ENCODE measurements at regions of chr10 and their contacts with region 1.

Region 1: DNA sequence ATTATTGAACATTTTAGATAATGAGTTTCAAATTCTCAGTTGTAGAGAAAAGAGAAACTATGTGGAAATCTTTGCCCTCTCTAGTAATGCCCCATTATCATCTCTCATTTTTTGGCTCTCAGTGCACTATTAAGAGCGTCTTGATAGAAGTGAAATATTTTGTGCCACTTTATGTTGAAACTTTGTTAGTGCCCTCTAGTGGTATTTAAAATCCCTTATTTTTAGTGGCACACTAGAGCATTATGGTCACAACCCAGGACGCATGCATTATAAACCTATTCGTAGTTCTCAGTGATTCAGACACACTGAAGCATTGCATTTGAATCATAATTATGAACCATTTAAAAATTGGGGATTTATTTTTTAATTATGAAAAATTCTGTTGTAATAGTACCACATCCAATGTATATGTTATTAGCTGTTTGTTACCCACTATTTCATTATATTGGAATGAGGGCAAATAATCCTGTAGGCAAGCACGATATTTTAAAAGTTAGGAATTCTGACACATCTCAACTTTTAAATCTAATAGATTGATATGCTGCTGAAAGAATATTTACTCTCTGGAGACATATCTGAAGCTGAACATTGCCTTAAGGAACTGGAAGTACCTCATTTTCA is 21.9 kb downstream of the PDCD4 start:
- DNase-seq: peak in 1 of 2 experiments; percentile 64
- H3K4me3 ChIP-seq: no peak overlapping the region
- H3K4me1 ChIP-seq: peaks cover 17% of the 10 kb centered on the region
- H3K27me3 ChIP-seq: no peaks in the 10 kb centered on the region

Region 2: GRCh38 chr10:110610308-110610774 is 283.3 kb before region 1 on chr10:
- in situ Hi-C with region 1: loop called (anchors 25 kb)
- DNase-seq: peak; percentile 70 to 73
- H3K4me3 ChIP-seq: no peak overlapping the region
- H3K4me1 ChIP-seq: peaks cover 7% of the 10 kb centered on the region; the same call in 1 of the 2 replicates
- H3K27me3 ChIP-seq: peaks cover 8% of the 10 kb centered on the region; the same call in 1 of the 2 replicates